Activated naive CD4-positive, alpha-beta T cell treated with anti-CD3 and anti-CD28 coated beads for 36 hours (primary cell): ENCODE measurements at regions of chr18 and their contacts with region 1.

Region 1: GRCh38 chr18:55781481-55781957 is 193.5 kb upstream of the TCF4 start:
- DNase-seq: no peak
- H3K4me3 Mint-ChIP-seq: no peak overlapping the region
- H3K27ac Mint-ChIP-seq: no peak overlapping the region
- H3K4me1 Mint-ChIP-seq: peaks cover 2% of the 10 kb centered on the region
- H3K27me3 Mint-ChIP-seq: peaks cover 42% of the 10 kb centered on the region

Region 2: DNA sequence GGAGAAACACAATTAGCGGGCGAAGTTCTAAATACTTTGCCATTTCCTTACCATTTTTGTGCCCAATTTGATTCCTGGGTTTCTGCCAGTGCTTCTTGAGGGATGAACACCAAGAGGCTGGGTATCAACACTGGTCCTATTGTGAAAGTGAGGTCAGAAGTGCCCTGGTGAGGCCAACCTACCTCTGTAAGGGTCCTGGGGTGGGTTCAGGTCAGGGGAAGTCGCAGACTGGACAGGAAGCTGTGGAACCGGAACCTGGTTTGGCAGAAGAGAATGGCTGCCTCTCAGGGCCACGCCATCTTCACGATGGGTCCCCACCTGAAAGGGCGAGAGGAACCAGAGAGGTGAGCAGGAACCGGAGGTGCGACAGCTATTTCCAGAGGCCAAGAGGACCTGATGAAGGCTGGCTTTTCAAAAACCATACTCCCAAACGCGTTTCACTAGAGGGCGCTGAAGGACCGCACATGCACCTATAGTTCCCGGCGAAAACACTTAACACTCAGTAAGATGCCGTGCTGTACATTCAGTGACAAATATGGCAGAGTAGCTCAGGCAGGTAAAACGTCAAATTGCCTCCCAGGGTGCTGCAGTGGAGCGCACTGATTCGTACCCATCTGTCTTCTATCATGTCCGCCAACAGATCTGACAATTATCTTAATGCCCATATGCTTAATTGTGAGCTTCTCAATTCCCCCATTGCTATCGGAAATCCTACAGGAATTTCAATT is 547.0 kb before region 1 on chr18:
- CTCF ChIA-PET with region 1: no interaction called
- intact Hi-C with region 1: loop called (anchors 5 kb)
- DNase-seq: peak; percentile 77
- H3K4me3 Mint-ChIP-seq: no peak overlapping the region
- H3K27ac Mint-ChIP-seq: no peak overlapping the region
- H3K4me1 Mint-ChIP-seq: no peaks in the 10 kb centered on the region
- H3K27me3 Mint-ChIP-seq: no peaks in the 10 kb centered on the region

Region 3: GRCh38 chr18:55407191-55407590 is 374.3 kb before region 1 on chr18:
- CTCF ChIA-PET with region 1: no interaction called
- intact Hi-C with region 1: no loop called
- DNase-seq: no peak
- H3K4me3 Mint-ChIP-seq: no peak overlapping the region
- H3K27ac Mint-ChIP-seq: no peak overlapping the region
- H3K4me1 Mint-ChIP-seq: no peaks in the 10 kb centered on the region
- H3K27me3 Mint-ChIP-seq: peaks cover 4% of the 10 kb centered on the region

Region 4: GRCh38 chr18:55589625-55590291 is 191.8 kb before region 1 on chr18:
- CTCF ChIA-PET with region 1: no interaction called
- intact Hi-C with region 1: loop called (anchors 5 kb)
- DNase-seq: peak; percentile 86
- H3K4me3 Mint-ChIP-seq: peak overlapping the region; percentile 70
- H3K27ac Mint-ChIP-seq: no peak overlapping the region
- H3K4me1 Mint-ChIP-seq: peaks cover 19% of the 10 kb centered on the region
- H3K27me3 Mint-ChIP-seq: peaks cover 59% of the 10 kb centered on the region